Left cardiac atrium (tissue), 4 donors: ENCODE measurements at regions of chr10 and their contacts with region 1.

Region 1: GRCh38 chr10:119725828-119726675 is at the start of gene INPP5F:
- DNase-seq: peak; percentile 99
- ATAC-seq: peak; percentile 99
- total RNA-seq, gene INPP5F: 6.2 to 8.3 TPM

Region 2: DNA sequence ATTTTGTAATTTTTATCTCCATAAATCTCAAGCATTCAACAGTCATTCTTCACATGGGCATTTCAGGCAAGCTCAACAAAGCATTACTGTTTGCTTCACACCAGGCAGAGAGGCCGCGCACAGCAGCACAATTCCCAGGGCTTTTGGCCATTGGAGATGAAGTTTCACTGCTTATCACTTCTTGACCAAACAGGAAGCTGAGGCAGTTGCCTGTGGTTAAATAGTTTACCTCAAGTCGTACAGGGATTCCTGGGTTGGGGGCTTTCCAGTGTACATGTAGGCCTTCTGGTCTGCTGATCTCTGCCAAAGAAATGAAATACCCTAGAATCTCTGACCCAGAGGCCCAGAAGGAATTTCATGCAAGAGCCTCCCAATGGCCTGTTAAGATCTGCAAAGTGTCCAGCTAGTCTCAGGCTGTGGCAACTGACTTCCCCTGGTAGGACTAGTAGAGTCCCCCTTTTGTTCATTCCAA is 536.2 kb before region 1 on chr10:
- intact Hi-C with region 1: no loop called
- DNase-seq: no peak
- ATAC-seq: no peak

Region 3: GRCh38 chr10:119608316-119609155 is 117.5 kb before region 1 on chr10:
- intact Hi-C with region 1: loop called in 1 of 2 experiments (anchors 10 kb)
- DNase-seq: peak; percentile 51
- ATAC-seq: peak; percentile 84 to 85

Region 4: GRCh38 chr10:119686439-119687191 is 39.4 kb before region 1 on chr10:
- intact Hi-C with region 1: loop called in 1 of 2 experiments (anchors 2 kb)
- DNase-seq: peak; percentile 82
- ATAC-seq: peak; percentile 88 to 93